ENCODE measurements at regions of chr13 and their contacts with region 1.

Region 1: DNA sequence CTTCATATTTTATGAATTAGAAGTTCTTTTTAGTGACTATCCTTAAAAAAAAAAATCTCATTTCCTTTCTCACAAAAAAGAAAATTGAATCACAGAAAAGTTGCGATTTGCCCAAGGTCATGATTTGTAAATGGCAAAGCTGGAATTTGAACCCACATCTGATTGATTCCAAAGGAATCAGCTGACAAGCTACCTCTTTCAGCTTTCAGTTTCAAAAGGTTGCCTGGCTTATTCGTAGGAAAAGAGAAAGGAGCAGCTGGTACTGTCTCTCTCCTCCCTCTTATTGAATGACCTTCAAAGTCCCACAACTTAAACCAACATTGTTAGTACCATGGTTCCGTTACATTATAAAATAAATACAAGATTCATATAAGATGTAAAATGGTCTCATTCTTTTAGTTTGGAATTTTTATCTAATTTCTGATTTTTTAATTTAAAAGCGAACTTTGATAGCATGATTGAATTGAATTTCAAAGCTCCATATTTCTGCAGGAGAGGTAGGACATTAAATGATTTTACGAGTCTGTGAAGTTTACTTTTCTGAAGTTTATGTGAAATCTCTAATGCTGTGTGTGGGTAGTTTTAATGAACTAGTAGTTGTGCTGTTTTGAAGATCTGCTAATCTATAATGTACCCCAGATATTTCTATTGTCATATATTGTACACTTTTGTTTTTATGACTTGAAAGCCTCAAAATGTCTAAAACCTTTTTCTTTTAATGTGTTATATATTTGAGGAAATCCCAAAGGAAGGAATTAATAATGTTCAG is 18.5 kb upstream of the KCTD4 start:
- DNase-seq: no peak
- H3K4me3 ChIP-seq: no peak overlapping the region
- H3K27ac ChIP-seq: no peak overlapping the region
- H3K4me1 ChIP-seq: peaks cover 0 to 11% (median 4%) of the 10 kb centered on the region in 4 experiments
- H3K27me3 ChIP-seq: no peaks in the 10 kb centered on the region

Region 2: GRCh38 chr13:45206340-45206739 is 13.0 kb before region 1 on chr13:
- CTCF ChIA-PET with region 1: no interaction called
- POLR2A ChIA-PET with region 1: no interaction called
- DNase-seq: no peak
- H3K4me3 ChIP-seq: no peak overlapping the region
- H3K27ac ChIP-seq: no peak overlapping the region
- H3K4me1 ChIP-seq: peaks cover 0 to 3% (median 0%) of the 10 kb centered on the region in 4 experiments
- H3K27me3 ChIP-seq: no peaks in the 10 kb centered on the region

Region 3: DNA sequence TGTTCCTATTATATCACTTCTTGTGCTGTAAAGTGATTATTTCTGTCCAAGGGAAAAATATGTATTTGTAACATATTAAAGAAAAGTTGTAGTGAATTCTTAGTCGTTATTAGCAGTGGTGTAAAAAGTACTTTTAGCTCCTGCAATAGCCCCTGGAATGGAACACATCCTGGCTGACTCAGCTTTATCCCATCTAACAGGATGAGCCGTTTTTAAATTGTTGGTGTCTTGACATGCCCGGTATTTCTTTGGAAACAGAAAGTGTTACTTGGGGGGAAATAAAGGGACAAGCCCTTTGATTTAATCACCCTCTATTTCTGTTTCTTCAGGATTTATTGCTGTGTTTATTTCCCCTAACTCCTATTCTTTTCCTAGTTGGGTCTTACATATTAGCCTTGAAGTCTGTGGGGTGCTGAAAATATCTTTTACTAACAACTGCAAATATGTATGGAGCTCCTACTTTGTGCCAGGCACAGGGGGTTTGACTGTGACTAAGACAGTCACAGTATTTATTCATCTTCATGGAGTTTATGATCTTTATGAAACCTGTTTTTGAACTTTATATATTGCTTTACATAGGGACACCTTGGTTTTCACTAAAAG is 263.4 kb after region 1 on chr13:
- CTCF ChIA-PET with region 1: no interaction called
- POLR2A ChIA-PET with region 1: interaction called, 13 read pairs
- DNase-seq: no peak
- H3K4me3 ChIP-seq: peak overlapping the region in 2 of 7 experiments; percentile 4 to 16
- H3K27ac ChIP-seq: peak overlapping the region; percentile 9 to 49
- H3K4me1 ChIP-seq: peaks cover 0 to 9% (median 0%) of the 10 kb centered on the region in 4 experiments
- H3K27me3 ChIP-seq: no peaks in the 10 kb centered on the region